ENCODE measurements at regions of chr9 and their contacts with region 1.

Region 1: DNA sequence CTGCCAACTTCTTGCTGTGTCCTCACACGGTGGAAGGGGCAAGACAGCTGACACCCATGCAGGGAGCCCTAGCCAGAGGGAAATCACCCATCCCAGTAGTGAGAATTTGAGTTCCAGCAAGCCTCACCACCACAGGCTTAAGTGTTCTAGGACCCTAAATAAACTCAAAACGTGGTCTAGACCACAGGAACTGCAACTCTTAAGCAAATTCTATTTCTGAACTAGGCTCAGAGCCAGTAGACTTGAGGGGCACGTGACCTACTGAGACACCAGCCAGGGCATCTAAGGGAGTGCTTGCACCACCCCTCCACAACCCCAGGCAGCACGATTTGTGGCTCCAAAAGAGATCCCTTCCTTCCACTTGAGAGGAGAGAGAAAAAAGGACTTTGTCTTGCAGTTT is 96.0 kb upstream of the PHF24 start:
- DNase-seq: no peak
- ATAC-seq: no peak
- H3K4me3 ChIP-seq: no peak overlapping the region
- H3K27ac ChIP-seq: no peak overlapping the region
- H3K4me1 ChIP-seq: peaks cover 0 to 4% (median 0%) of the 10 kb centered on the region in 9 donors
- H3K27me3 ChIP-seq: no peaks in the 10 kb centered on the region
- CTCF ChIP-seq: no peak

Region 2: GRCh38 chr9:34777666-34778065 is 84.4 kb before region 1 on chr9:
- intact Hi-C with region 1: loop called in 1 of 10 experiments (anchors 10 kb)
- DNase-seq: no peak
- ATAC-seq: no peak
- H3K4me3 ChIP-seq: no peak overlapping the region
- H3K27ac ChIP-seq: no peak overlapping the region
- H3K4me1 ChIP-seq: peaks cover 0 to 3% (median 0%) of the 10 kb centered on the region in 9 donors
- H3K27me3 ChIP-seq: peaks cover 0 to 3% (median 0%) of the 10 kb centered on the region in 7 donors
- CTCF ChIP-seq: no peak